ENCODE measurements at regions of chr2 and their contacts with region 1.

Region 1: GRCh38 chr2:218257390-218257981 is 3.3 kb upstream of the GPBAR1 start:
- DNase-seq: peak; percentile 75
- H3K4me3 Mint-ChIP-seq: no peak overlapping the region
- H3K27ac Mint-ChIP-seq: peak overlapping the region; percentile 83
- H3K4me1 Mint-ChIP-seq: peaks cover 39% of the 10 kb centered on the region
- H3K27me3 Mint-ChIP-seq: no peaks in the 10 kb centered on the region

Region 2: GRCh38 chr2:218168635-218169462 is 88.6 kb before region 1 on chr2:
- CTCF ChIA-PET with region 1: interaction called, 14 read pairs
- POLR2A ChIA-PET with region 1: interaction called, 3 read pairs
- DNase-seq: peak; percentile 67
- H3K4me3 Mint-ChIP-seq: no peak overlapping the region
- H3K27ac Mint-ChIP-seq: no peak overlapping the region
- H3K4me1 Mint-ChIP-seq: peaks cover 36% of the 10 kb centered on the region
- H3K27me3 Mint-ChIP-seq: peaks cover 35% of the 10 kb centered on the region

Region 3: GRCh38 chr2:218216674-218217359 is 40.7 kb before region 1 on chr2 and contains the start of gene ARPC2:
- CTCF ChIA-PET with region 1: interaction called, 24 read pairs
- POLR2A ChIA-PET with region 1: interaction called, 8 read pairs
- DNase-seq: peak; percentile 96
- H3K4me3 Mint-ChIP-seq: peak within 1 kb of the TSS; percentile 93
- H3K27ac Mint-ChIP-seq: peak within 1 kb of the TSS; percentile 92
- H3K4me1 Mint-ChIP-seq: peaks cover 41% of the 10 kb centered on the region
- H3K27me3 Mint-ChIP-seq: no peaks in the 10 kb centered on the region
- total RNA-seq, gene ARPC2: 765 to 778 TPM

Region 4: DNA sequence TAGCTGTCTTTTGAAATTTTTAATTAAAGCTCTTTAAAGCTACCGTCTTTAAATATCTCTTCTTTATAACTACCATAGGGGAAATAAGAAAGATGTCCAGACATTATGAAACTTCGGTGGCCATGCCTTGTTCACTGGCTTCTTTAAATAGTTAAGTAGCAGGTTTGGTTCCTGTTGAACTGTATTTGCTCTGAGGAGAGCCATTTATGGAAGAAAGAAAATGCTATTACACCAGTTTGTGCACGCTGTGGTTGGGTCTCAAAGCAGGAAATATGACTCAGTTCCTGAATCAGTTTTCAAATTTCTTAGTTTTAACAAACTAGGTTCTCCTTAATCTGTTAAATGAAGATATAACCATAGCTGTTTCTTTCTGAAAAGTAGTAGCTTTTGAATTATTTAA is 28.2 kb before region 1 on chr2:
- CTCF ChIA-PET with region 1: interaction called, 11 read pairs
- POLR2A ChIA-PET with region 1: interaction called, 32 read pairs
- DNase-seq: peak; percentile 63
- H3K4me3 Mint-ChIP-seq: peak overlapping the region; percentile 33
- H3K27ac Mint-ChIP-seq: peak overlapping the region; percentile 86
- H3K4me1 Mint-ChIP-seq: peaks cover 82% of the 10 kb centered on the region
- H3K27me3 Mint-ChIP-seq: no peaks in the 10 kb centered on the region

Region 5: GRCh38 chr2:218269899-218270720 is 12.6 kb after region 1 on chr2 and contains the starts of genes AAMP and PNKD:
- CTCF ChIA-PET with region 1: interaction called, 17 read pairs
- POLR2A ChIA-PET with region 1: interaction called, 13 read pairs
- DNase-seq: peak; percentile 100
- H3K4me3 Mint-ChIP-seq: peak within 1 kb of the TSS; percentile 89
- H3K27ac Mint-ChIP-seq: peak within 1 kb of the TSS; percentile 75
- H3K4me1 Mint-ChIP-seq: peaks cover 52% of the 10 kb centered on the region
- H3K27me3 Mint-ChIP-seq: no peaks in the 10 kb centered on the region
- total RNA-seq, gene AAMP: 44.2 to 46.8 TPM
- total RNA-seq, gene PNKD: 30.1 to 31.8 TPM

Region 6: DNA sequence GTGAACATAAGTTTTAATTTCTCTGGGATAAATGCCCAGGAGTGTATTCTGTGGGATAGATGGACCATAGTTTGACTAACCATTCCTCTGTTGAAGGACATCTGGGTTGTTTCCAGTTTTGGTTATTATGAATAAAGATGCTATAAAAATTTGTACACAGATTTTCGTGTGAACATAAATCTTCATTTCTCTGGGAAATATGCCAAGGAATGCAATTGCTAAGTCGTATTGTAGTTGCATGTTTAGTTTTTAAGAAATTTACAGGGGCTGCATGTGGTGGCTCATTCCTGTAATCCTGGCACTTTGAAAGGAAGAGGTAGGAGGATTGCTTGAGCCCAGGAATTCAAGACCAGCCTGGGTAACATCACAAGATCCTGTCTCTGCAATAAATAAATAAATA is 117.7 kb after region 1 on chr2:
- CTCF ChIA-PET with region 1: no interaction called
- POLR2A ChIA-PET with region 1: no interaction called
- DNase-seq: no peak
- H3K4me3 Mint-ChIP-seq: no peak overlapping the region
- H3K27ac Mint-ChIP-seq: no peak overlapping the region
- H3K4me1 Mint-ChIP-seq: no peaks in the 10 kb centered on the region
- H3K27me3 Mint-ChIP-seq: peaks cover 6% of the 10 kb centered on the region

Measured in activated CD4-positive, alpha-beta memory T cell treated with anti-CD3 and anti-CD28 coated beads, Interleukin-2, amount 10 ng/mL, durations not matched to agents 7 days and 5 days (primary cell).